ENCODE measurements at regions of chr5 and their contacts with region 1.

Region 1: DNA sequence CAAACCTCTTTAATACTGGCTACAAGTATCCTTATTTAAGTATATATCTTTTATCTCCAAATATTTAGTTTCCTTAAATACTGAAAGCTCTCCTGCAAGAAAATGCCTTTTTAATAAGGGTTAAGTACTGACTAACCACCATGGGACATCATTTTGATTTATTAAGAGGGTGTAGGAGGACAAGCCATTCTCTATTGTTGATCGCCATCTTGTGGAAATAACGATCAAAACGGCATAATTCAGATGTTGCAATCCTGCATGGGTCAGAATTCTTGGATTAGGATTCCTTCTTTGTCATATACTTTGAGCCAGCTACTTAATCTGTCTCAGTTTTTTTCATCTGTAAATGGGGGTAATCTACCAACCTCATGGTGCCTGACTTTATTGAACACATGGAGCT is 28.7 kb upstream of the C5orf46 start:
- DNase-seq: peak; percentile 86
- H3K4me3 Mint-ChIP-seq: no peak overlapping the region
- H3K27ac Mint-ChIP-seq: no peak overlapping the region
- H3K4me1 Mint-ChIP-seq: peaks cover 9% of the 10 kb centered on the region
- H3K27me3 Mint-ChIP-seq: no peaks in the 10 kb centered on the region
- CTCF ChIP-seq: peak; percentile 91

Region 2: GRCh38 chr5:147628058-147628895 is 306.8 kb before region 1 on chr5:
- CTCF ChIA-PET with region 1: interaction called, 58 read pairs
- POLR2A ChIA-PET with region 1: no interaction called
- intact Hi-C with region 1: loop called (anchors 1 kb)
- DNase-seq: peak; percentile 90
- H3K4me3 Mint-ChIP-seq: no peak overlapping the region
- H3K27ac Mint-ChIP-seq: no peak overlapping the region
- H3K4me1 Mint-ChIP-seq: no peaks in the 10 kb centered on the region
- H3K27me3 Mint-ChIP-seq: peaks cover 20% of the 10 kb centered on the region
- CTCF ChIP-seq: peak; percentile 91

Region 3: GRCh38 chr5:147849226-147849625 is 85.8 kb before region 1 on chr5:
- CTCF ChIA-PET with region 1: interaction called, 286 read pairs
- POLR2A ChIA-PET with region 1: no interaction called
- intact Hi-C with region 1: no loop called
- DNase-seq: no peak
- H3K4me3 Mint-ChIP-seq: no peak overlapping the region
- H3K27ac Mint-ChIP-seq: no peak overlapping the region
- H3K4me1 Mint-ChIP-seq: no peaks in the 10 kb centered on the region
- H3K27me3 Mint-ChIP-seq: peaks cover 31% of the 10 kb centered on the region
- CTCF ChIP-seq: no peak

Region 4: DNA sequence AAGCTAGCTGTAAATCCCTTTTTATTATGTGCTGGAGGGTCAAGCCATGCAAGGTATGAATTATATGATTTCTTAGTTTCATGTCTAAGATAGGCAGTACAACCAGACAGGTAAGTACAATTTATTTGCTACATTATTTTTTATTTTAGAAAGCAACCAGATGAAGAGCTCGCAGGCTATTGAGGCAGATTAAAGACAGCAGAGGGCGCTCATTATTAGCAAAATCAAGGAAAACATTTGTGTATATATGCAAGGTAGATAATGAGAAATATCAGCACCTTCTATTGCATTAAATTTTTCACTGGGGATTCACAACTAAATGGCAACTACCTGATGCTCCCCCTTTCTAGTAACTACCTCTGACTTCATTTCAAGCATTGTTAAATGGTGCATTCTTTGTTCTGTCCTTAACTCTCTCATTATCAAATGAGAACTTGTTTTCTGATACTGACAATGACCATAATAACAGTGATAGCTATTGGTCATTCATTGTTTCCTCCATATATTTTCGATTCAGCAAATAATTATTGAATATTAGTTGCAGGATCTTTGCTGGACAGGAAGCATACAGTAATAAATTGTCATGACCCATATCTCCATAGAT is 47.9 kb before region 1 on chr5:
- CTCF ChIA-PET with region 1: interaction called, 415 read pairs
- POLR2A ChIA-PET with region 1: interaction called, 11 read pairs
- intact Hi-C with region 1: loop called (anchors 1 kb)
- DNase-seq: peak; percentile 75
- H3K4me3 Mint-ChIP-seq: no peak overlapping the region
- H3K27ac Mint-ChIP-seq: no peak overlapping the region
- H3K4me1 Mint-ChIP-seq: peaks cover 16% of the 10 kb centered on the region
- H3K27me3 Mint-ChIP-seq: no peaks in the 10 kb centered on the region
- CTCF ChIP-seq: peak; percentile 76

Region 5: GRCh38 chr5:147906332-147907095 is 28.5 kb before region 1 on chr5 and contains the start of gene C5orf46:
- CTCF ChIA-PET with region 1: interaction called, 47 read pairs
- POLR2A ChIA-PET with region 1: interaction called, 4 read pairs
- intact Hi-C with region 1: no loop called
- DNase-seq: peak; percentile 75
- H3K4me3 Mint-ChIP-seq: peak within 1 kb of the TSS; percentile 69
- H3K27ac Mint-ChIP-seq: peak within 1 kb of the TSS; percentile 85
- H3K4me1 Mint-ChIP-seq: peaks cover 39% of the 10 kb centered on the region
- H3K27me3 Mint-ChIP-seq: no peaks in the 10 kb centered on the region
- CTCF ChIP-seq: no peak
- total RNA-seq, gene C5orf46: 2.1 and 5.7 TPM in 2 replicates

Region 6: GRCh38 chr5:147949711-147950573 is 14.9 kb after region 1 on chr5:
- CTCF ChIA-PET with region 1: interaction called, 10 read pairs
- POLR2A ChIA-PET with region 1: no interaction called
- intact Hi-C with region 1: no loop called
- DNase-seq: peak; percentile 73
- H3K4me3 Mint-ChIP-seq: no peak overlapping the region
- H3K27ac Mint-ChIP-seq: peak overlapping the region; percentile 54
- H3K4me1 Mint-ChIP-seq: peaks cover 5% of the 10 kb centered on the region
- H3K27me3 Mint-ChIP-seq: no peaks in the 10 kb centered on the region
- CTCF ChIP-seq: peak; percentile 86

Region 7: DNA sequence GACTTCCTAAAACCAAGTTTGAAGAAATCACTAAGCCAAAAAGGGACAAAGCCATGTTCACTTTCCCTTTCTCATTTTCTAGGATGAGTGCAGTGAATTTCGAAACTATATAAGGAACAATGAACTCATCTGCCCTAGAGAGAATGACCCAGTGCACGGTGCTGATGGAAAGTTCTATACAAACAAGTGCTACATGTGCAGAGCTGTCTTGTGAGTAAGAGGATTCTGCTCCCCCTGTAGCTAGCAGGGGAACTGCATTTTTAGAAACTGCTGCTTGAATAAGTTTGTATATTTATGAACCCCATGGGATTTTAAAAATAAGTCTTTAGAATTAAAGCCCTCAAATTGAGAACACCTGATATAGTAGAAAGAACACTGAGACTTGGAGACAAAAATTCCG is 190.6 kb after region 1 on chr5:
- CTCF ChIA-PET with region 1: interaction called, 12 read pairs
- POLR2A ChIA-PET with region 1: no interaction called
- intact Hi-C with region 1: no loop called
- DNase-seq: peak; percentile 41
- H3K4me3 Mint-ChIP-seq: no peak overlapping the region
- H3K27ac Mint-ChIP-seq: no peak overlapping the region
- H3K4me1 Mint-ChIP-seq: no peaks in the 10 kb centered on the region
- H3K27me3 Mint-ChIP-seq: no peaks in the 10 kb centered on the region
- CTCF ChIP-seq: peak; percentile 24

Measured in MCF 10A (cell line).